Natural killer cell (primary cell): ENCODE measurements at regions of chr10 and their contacts with region 1.

Region 1: GRCh38 chr10:80487791-80488538 is 33.9 kb downstream of the TSPAN14 start:
- DNase-seq: peak; percentile 72 to 81
- ATAC-seq: peak; percentile 72 to 83 (median 81)
- H3K4me3 ChIP-seq: no peak overlapping the region
- H3K4me3 Mint-ChIP-seq: peak overlapping the region; percentile 82
- H3K27ac ChIP-seq: peak overlapping the region; percentile 71
- H3K27ac Mint-ChIP-seq: peak overlapping the region; percentile 75 to 89
- H3K4me1 ChIP-seq: peaks cover 93% of the 10 kb centered on the region
- H3K4me1 Mint-ChIP-seq: peaks cover 94 to 99% of the 10 kb centered on the region in 2 donors
- H3K27me3 ChIP-seq: no peaks in the 10 kb centered on the region
- H3K27me3 Mint-ChIP-seq: no peaks in the 10 kb centered on the region
- CTCF ChIP-seq: no peak

Region 2: GRCh38 chr10:80453701-80454513 is 34.1 kb before region 1 on chr10 and contains the start of gene TSPAN14:
- intact Hi-C with region 1: loop called (anchors 2 kb)
- DNase-seq: peak; percentile 67 to 87
- ATAC-seq: peak; percentile 70 to 85 (median 80)
- H3K4me3 ChIP-seq: peak within 1 kb of the TSS; percentile 82
- H3K4me3 Mint-ChIP-seq: peak within 1 kb of the TSS; percentile 96
- H3K27ac ChIP-seq: peak within 1 kb of the TSS; percentile 74
- H3K27ac Mint-ChIP-seq: peak within 1 kb of the TSS; percentile 91 to 92
- H3K4me1 ChIP-seq: peaks cover 44% of the 10 kb centered on the region
- H3K4me1 Mint-ChIP-seq: peaks cover 33 to 35% of the 10 kb centered on the region in 2 donors
- H3K27me3 ChIP-seq: no peaks in the 10 kb centered on the region
- H3K27me3 Mint-ChIP-seq: no peaks in the 10 kb centered on the region
- CTCF ChIP-seq: no peak
- total RNA-seq, gene TSPAN14: 126 to 180 (median 173) TPM

Region 3: DNA sequence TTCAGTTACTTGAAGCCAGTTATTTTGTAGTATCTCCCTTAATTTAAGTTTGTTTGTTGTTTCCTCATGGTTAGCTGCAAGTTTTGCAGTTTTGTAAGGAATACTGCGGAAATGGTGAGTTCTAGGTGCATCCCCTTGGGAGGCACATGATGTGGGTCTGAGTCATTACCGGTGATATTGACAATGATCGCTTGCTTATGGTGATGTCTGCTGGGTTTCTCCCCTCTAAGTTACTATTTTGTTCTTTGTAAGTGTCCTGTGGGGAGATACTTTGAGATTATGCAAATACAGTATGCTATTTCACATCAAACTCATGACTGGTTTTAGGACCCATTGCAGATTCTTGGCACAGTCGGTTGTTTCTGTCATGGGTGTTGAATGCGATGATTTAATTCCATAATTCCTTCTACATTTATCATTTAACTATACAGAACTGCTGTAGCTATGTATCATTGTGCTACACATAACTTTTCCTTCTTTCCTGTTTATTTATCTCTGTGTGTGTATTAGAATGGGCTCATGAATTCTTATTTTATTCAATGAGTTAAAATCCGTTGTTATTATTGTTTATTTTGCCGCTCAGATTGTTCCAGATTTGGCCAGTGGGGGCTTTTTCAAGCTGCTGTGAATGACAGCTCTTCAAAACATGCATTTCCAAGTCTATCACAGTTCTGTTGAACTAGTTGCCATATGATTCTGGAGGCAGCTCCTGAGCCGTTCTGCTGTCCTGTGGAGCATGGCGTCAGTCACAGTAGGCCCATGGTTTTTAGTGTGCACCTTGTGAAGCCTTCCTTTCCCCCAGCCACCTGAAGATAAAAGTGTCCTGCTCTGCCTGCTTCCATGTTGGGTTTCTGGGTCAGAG is 15.5 kb before region 1 on chr10:
- intact Hi-C with region 1: loop called (anchors 2 kb)
- DNase-seq: peak in 1 of 2 donors; percentile 76
- ATAC-seq: peak in 2 of 3 donors; percentile 11 to 61
- H3K4me3 ChIP-seq: no peak overlapping the region
- H3K4me3 Mint-ChIP-seq: peak overlapping the region; percentile 29
- H3K27ac ChIP-seq: peak overlapping the region; percentile 54
- H3K27ac Mint-ChIP-seq: peak overlapping the region; percentile 91 to 92
- H3K4me1 ChIP-seq: peaks cover 92% of the 10 kb centered on the region
- H3K4me1 Mint-ChIP-seq: peaks cover 89 to 91% of the 10 kb centered on the region in 2 donors
- H3K27me3 ChIP-seq: no peaks in the 10 kb centered on the region
- H3K27me3 Mint-ChIP-seq: no peaks in the 10 kb centered on the region
- CTCF ChIP-seq: no peak

Region 4: DNA sequence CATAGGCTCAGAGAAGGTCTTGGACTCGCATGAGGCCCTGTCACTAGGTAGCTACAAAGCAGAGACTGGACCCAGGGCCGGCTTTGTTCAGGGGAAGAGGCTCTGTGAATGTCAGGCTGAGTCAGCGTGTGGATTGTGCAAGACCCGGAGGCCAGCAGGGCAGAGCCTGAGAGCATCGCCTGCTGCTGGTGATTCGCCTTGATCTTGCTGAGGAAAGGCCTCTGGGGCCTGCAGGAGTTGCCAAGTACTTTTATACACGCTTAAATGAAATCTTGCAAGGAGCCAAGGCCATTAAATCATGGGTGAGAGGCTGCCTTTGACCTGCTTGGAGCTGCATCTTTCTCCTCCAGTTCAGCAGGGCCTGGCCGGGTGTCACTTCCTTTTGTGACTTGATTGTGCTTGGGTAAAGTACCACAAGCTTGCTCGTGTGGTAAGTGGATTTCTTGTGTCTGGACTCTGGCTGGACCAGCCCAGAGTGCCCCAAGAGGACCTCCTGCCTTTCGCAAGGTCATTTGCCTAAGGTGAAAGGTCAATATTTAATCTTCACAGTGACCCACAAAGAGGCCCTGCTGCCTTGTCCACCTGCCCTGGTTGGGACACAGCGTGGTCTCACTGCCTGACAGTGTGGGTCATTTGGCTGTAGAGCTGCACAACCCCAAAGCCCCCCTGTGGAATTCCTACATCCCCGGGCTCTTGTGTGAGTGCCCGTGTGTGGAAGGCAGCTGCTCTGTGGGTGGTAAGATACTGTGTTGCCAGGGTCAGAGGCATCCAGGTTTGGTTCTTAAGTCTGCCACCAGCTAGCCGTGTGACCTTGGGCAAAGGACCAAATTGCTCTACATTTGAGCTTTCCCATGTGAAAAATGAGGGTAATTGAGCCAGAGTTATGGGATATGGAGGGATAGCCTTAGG is 11.1 kb after region 1 on chr10:
- intact Hi-C with region 1: loop called (anchors 1 kb)
- DNase-seq: peak; percentile 60 to 68
- ATAC-seq: peak; percentile 78 to 85 (median 81)
- H3K4me3 ChIP-seq: no peak overlapping the region
- H3K4me3 Mint-ChIP-seq: peak overlapping the region; percentile 75
- H3K27ac ChIP-seq: peak overlapping the region; percentile 77
- H3K27ac Mint-ChIP-seq: peak overlapping the region; percentile 75 to 81
- H3K4me1 ChIP-seq: peaks cover 89% of the 10 kb centered on the region
- H3K4me1 Mint-ChIP-seq: peaks cover 96 to 98% of the 10 kb centered on the region in 2 donors
- H3K27me3 ChIP-seq: no peaks in the 10 kb centered on the region
- H3K27me3 Mint-ChIP-seq: no peaks in the 10 kb centered on the region
- CTCF ChIP-seq: no peak